BJ (cell line): ENCODE measurements at regions of chr16 and their contacts with region 1.

Region 1: GRCh38 chr16:79895917-79896203 is 295.3 kb upstream of the MAF start:
- DNase-seq: no peak
- H3K4me3 ChIP-seq: no peak overlapping the region
- H3K27me3 ChIP-seq: no peaks in the 10 kb centered on the region
- CTCF ChIP-seq: no peak

Region 2: DNA sequence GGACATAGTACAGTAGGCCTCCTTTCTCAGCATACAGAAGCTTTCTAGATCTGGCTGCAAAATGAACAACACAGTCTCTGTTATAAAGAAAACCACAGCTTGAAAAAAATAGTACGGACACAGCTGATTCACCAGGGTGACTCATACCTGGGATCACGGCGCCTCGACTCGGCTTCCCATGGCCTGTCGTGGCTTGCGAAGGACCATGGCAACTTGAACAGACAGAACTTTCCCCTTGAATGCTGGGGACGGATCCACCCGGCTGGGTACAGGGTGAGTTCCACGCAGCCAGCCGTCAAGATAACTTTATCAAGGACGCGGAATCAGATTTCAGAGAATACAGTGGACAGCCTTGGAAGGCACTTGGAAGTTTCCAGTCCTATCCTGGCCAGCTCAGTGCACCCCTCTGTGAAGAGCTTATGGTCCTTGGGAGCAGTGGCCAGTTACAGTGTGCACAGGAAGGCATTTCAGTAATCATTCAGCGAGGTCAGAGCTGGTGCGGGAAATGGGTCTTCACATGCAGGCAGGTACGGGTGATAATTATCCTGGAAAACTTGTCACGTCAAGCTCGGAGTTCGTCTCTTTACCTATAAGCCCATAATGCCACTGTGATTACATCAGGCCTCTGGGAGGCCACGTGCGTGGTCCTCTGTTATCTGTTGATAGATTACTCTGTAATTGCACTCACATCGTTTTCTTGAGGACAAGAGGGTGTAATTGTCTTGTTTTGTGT is 237.4 kb before region 1 on chr16:
- CTCF ChIA-PET with region 1: no interaction called
- POLR2A ChIA-PET with region 1: no interaction called
- DNase-seq: no peak
- H3K4me3 ChIP-seq: no peak overlapping the region
- H3K27me3 ChIP-seq: no peaks in the 10 kb centered on the region
- CTCF ChIP-seq: no peak

Region 3: GRCh38 chr16:80150978-80151721 is 255.3 kb after region 1 on chr16:
- CTCF ChIA-PET with region 1: no interaction called
- POLR2A ChIA-PET with region 1: interaction called, 12 read pairs
- DNase-seq: peak; percentile 89
- H3K4me3 ChIP-seq: no peak overlapping the region
- H3K27me3 ChIP-seq: no peaks in the 10 kb centered on the region
- CTCF ChIP-seq: no peak